ENCODE measurements at regions of chr1 and their contacts with region 1.

Region 1: GRCh38 chr1:231364192-231364591 is 26.1 kb downstream of the SPRTN start:
- DNase-seq: no peak
- ATAC-seq: no peak
- H3K4me3 ChIP-seq: no peak overlapping the region
- H3K4me1 ChIP-seq: no peaks in the 10 kb centered on the region
- CTCF ChIP-seq: no peak

Region 2: DNA sequence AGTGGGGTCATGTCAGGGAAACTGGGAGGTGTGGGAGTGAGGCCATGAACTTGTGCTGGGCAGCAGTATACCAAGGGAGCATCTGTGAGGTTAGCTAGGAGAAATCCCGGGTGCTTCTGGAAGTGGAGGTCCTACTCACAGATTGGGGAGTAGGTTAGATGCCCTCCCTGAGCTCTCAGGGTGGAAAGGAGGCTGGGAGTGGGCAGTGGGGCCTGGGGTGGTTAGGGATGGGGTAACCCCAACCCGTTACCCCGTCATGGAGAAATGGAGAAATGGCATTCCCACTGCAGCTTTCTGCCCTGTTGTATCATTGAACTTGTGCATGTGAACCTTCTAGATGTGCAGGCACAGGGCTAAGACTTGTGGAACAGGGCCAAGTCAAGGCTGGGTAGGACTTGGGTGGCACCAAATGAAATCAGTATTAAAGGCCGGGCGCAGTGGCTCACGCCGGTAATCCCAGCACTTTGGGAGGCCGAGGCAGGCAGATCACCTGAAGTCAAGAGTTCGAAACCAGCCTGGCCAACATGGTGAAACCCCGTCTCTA is 53.7 kb before region 1 on chr1:
- intact Hi-C with region 1: no loop called
- DNase-seq: no peak
- ATAC-seq: no peak
- H3K4me3 ChIP-seq: no peak overlapping the region
- H3K4me1 ChIP-seq: no peaks in the 10 kb centered on the region
- CTCF ChIP-seq: no peak

Region 3: GRCh38 chr1:231590453-231591198 is 226.4 kb after region 1 on chr1:
- intact Hi-C with region 1: loop called (anchors 5 kb)
- DNase-seq: peak in 2 of 3 donors; percentile 51 to 62
- ATAC-seq: peak; percentile 76
- H3K4me3 ChIP-seq: no peak overlapping the region
- H3K4me1 ChIP-seq: no peaks in the 10 kb centered on the region
- CTCF ChIP-seq: peak; percentile 64

Measured in mucosa of descending colon (tissue), 3 donors.